ENCODE measurements at regions of chr17 and their contacts with region 1.

Region 1: DNA sequence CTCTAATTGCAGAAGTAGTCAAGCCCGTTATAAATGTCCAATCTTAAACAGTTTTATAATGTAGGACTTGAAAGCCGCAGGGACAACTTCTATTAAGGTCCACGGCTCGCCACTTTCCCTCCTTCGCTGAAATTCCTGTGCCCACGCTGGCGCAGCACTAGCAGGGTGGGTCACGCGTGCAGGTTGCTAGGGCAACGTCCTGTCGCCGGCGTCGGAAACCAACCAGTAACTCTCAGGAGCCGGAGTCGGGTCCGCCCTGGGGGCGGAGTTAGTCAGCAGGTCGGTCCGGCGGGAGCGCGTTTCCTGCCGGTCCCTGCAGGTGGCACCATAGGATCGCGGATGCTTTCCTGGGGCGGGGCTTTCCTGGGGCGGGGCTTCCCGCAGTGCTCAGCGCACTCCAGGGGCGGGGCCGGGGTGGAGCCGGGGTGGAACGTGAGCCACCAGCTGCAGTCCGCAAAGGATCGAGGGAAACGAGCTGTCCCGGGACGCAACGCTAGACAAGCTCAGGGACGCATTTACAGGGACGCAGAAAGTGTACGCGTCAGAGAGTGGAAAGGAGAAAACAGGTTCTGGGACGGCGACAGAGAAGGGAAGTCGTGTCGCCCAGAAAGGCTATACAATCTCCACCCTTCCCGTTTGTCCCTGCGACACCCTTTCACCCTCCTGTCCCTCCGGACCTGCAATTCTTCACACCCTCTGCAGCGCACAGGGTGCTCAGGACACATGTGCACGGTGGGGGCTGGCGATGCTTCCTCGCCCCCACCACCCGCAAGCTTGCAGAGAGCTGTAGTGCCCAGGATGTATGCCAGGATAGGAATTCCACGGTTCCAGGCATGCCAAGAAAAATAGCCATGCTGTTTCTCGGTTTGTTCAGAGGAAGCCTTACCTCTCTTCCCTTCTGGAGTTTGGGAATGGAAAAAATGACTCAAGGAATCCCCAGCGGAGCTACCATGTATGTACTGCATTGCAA is 12.4 kb downstream of the COPZ2 start:
- DNase-seq: peak; percentile 91 to 97 (median 95)
- ATAC-seq: peak; percentile 98
- H3K4me3 ChIP-seq: peak overlapping the region; percentile 43
- H3K4me3 Mint-ChIP-seq: peak overlapping the region; percentile 83 to 92 (median 88)
- H3K27ac ChIP-seq: no peak overlapping the region
- H3K27ac Mint-ChIP-seq: peak overlapping the region in 8 of 9 donors; percentile 13 to 91 (median 73)
- H3K4me1 ChIP-seq: peaks cover 9 to 26% of the 10 kb centered on the region in 2 donors
- H3K4me1 Mint-ChIP-seq: peaks cover 23 to 46% (median 34%) of the 10 kb centered on the region in 7 donors
- H3K27me3 ChIP-seq: peaks cover 0 to 11% of the 10 kb centered on the region in 2 donors
- H3K27me3 Mint-ChIP-seq: peaks cover 28 to 50% (median 40%) of the 10 kb centered on the region in 5 donors

Region 2: GRCh38 chr17:47840740-47841603 is 184.2 kb before region 1 on chr17 and contains the start of gene SCRN2:
- CTCF ChIA-PET with region 1: no interaction called
- POLR2A ChIA-PET with region 1: no interaction called
- intact Hi-C with region 1: loop called in 1 of 2 experiments (anchors 5 kb)
- DNase-seq: peak; percentile 71 to 94 (median 81)
- ATAC-seq: peak; percentile 94
- H3K4me3 ChIP-seq: peak within 1 kb of the TSS; percentile 95
- H3K4me3 Mint-ChIP-seq: peak within 1 kb of the TSS; percentile 84 to 99 (median 94)
- H3K27ac ChIP-seq: peak within 1 kb of the TSS; percentile 75
- H3K27ac Mint-ChIP-seq: peak within 1 kb of the TSS; percentile 55 to 93 (median 86)
- H3K4me1 ChIP-seq: peaks cover 19 to 21% of the 10 kb centered on the region in 2 donors
- H3K4me1 Mint-ChIP-seq: peaks cover 9 to 49% (median 38%) of the 10 kb centered on the region in 7 donors
- H3K27me3 ChIP-seq: peaks cover 0 to 7% of the 10 kb centered on the region in 2 donors
- H3K27me3 Mint-ChIP-seq: peaks cover 6 to 23% (median 18%) of the 10 kb centered on the region in 5 donors
- total RNA-seq, gene SCRN2: 33.4 to 55.9 (median 41.4) TPM

Region 3: GRCh38 chr17:47895856-47896671 is 129.2 kb before region 1 on chr17 and contains the start of gene SP2:
- CTCF ChIA-PET with region 1: no interaction called
- POLR2A ChIA-PET with region 1: no interaction called
- intact Hi-C with region 1: no loop called
- DNase-seq: peak; percentile 96 to 100 (median 100)
- ATAC-seq: peak; percentile 92
- H3K4me3 ChIP-seq: peak within 1 kb of the TSS; percentile 80
- H3K4me3 Mint-ChIP-seq: peak within 1 kb of the TSS; percentile 88 to 100 (median 97)
- H3K27ac ChIP-seq: peak within 1 kb of the TSS; percentile 98
- H3K27ac Mint-ChIP-seq: peak within 1 kb of the TSS; percentile 98 to 100 (median 99)
- H3K4me1 ChIP-seq: peaks cover 20 to 23% of the 10 kb centered on the region in 2 donors
- H3K4me1 Mint-ChIP-seq: peaks cover 31 to 66% (median 57%) of the 10 kb centered on the region in 7 donors
- H3K27me3 ChIP-seq: no peaks in the 10 kb centered on the region
- H3K27me3 Mint-ChIP-seq: peaks cover 0 to 4% (median 0%) of the 10 kb centered on the region in 5 donors
- total RNA-seq, gene SP2: 25.2 to 36.5 (median 30.8) TPM

Region 4: DNA sequence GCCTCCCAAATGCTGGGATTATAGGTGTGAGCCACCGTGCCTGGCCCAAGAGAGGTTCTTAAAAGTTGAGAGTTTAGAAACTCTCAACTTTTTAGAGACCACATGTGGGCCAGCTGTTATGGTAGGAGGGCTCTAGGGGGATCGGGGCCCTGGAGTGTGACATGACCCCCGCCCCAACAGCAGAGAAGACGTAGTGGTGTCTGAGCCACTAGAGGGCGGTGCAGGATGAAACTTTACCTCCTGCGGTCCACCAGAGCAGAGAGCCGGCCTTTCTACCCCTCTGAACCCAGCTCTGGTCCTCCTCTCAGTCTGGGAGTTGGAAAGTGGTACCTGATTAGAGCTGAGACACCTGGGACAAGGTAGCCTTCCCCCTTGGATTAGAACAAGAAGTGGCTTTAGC is 46.9 kb before region 1 on chr17:
- CTCF ChIA-PET with region 1: no interaction called
- POLR2A ChIA-PET with region 1: no interaction called
- intact Hi-C with region 1: loop called in 1 of 2 experiments (anchors 1 kb)
- DNase-seq: peak in 7 of 9 donors; percentile 18 to 52 (median 35)
- ATAC-seq: peak; percentile 78
- H3K4me3 ChIP-seq: no peak overlapping the region
- H3K4me3 Mint-ChIP-seq: no peak overlapping the region
- H3K27ac ChIP-seq: no peak overlapping the region
- H3K27ac Mint-ChIP-seq: no peak overlapping the region
- H3K4me1 ChIP-seq: peaks cover 0 to 5% of the 10 kb centered on the region in 2 donors
- H3K4me1 Mint-ChIP-seq: peaks cover 0 to 12% (median 4%) of the 10 kb centered on the region in 7 donors
- H3K27me3 ChIP-seq: no peaks in the 10 kb centered on the region
- H3K27me3 Mint-ChIP-seq: no peaks in the 10 kb centered on the region

Region 5: GRCh38 chr17:48074315-48075081 is 49.3 kb after region 1 on chr17:
- CTCF ChIA-PET with region 1: interaction called, 66 read pairs
- POLR2A ChIA-PET with region 1: interaction called, 14 read pairs
- intact Hi-C with region 1: loop called (anchors 1 kb)
- DNase-seq: peak; percentile 21 to 74 (median 65)
- ATAC-seq: peak; percentile 85
- H3K4me3 ChIP-seq: no peak overlapping the region
- H3K4me3 Mint-ChIP-seq: no peak overlapping the region
- H3K27ac ChIP-seq: no peak overlapping the region
- H3K27ac Mint-ChIP-seq: peak overlapping the region in 2 of 9 donors; percentile 9 to 25
- H3K4me1 ChIP-seq: no peaks in the 10 kb centered on the region
- H3K4me1 Mint-ChIP-seq: peaks cover 0 to 8% (median 0%) of the 10 kb centered on the region in 7 donors
- H3K27me3 ChIP-seq: no peaks in the 10 kb centered on the region
- H3K27me3 Mint-ChIP-seq: no peaks in the 10 kb centered on the region

Region 6: DNA sequence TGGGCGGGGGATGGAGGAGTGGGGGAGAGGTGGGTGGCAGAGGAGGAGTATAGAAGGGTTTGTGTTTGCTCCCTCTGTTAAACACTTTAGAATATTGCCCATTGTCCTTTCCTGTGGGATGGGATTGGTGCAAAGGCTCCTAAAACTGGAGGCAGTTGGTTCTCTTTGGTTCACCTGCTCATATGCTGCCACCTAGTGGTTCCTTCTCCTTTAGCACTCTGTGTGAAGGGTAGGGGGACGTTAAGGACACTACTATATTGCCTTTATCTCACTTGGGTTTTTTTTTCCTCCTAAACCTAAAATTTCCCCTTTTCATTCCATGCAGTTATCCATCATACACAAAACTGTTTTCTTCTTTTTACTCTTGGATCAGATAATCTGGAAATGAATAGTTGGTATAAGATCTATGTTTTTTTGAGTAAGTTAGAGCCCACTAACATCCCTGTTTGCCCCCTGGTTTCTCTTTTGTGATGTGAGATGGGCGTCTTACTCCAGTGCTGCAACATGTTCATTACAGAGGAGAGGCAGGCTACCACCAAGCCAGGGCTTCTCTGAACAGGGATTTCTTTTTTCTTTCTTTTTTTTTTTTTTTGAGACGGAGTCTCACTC is 106.1 kb after region 1 on chr17:
- CTCF ChIA-PET with region 1: interaction called, 5 read pairs
- POLR2A ChIA-PET with region 1: no interaction called
- intact Hi-C with region 1: loop called (anchors 1 kb)
- DNase-seq: peak in 8 of 9 donors; percentile 21 to 64 (median 56)
- ATAC-seq: peak; percentile 91
- H3K4me3 ChIP-seq: no peak overlapping the region
- H3K4me3 Mint-ChIP-seq: no peak overlapping the region
- H3K27ac ChIP-seq: no peak overlapping the region
- H3K27ac Mint-ChIP-seq: peak overlapping the region in 5 of 9 donors; percentile 75 to 79 (median 78)
- H3K4me1 ChIP-seq: no peaks in the 10 kb centered on the region
- H3K4me1 Mint-ChIP-seq: peaks cover 0 to 4% (median 0%) of the 10 kb centered on the region in 7 donors
- H3K27me3 ChIP-seq: no peaks in the 10 kb centered on the region
- H3K27me3 Mint-ChIP-seq: no peaks in the 10 kb centered on the region

Region 7: GRCh38 chr17:48610282-48611211 is 585.3 kb after region 1 on chr17 and contains the start of gene HOXB7:
- CTCF ChIA-PET with region 1: interaction called, 5 read pairs
- POLR2A ChIA-PET with region 1: no interaction called
- intact Hi-C with region 1: loop called in 1 of 2 experiments (anchors 2 kb)
- DNase-seq: peak in 3 of 9 donors; percentile 21 to 73 (median 32)
- ATAC-seq: peak; percentile 36
- H3K4me3 ChIP-seq: peak within 1 kb of the TSS; percentile 81
- H3K4me3 Mint-ChIP-seq: peak within 1 kb of the TSS; percentile 74 to 97 (median 90)
- H3K27ac ChIP-seq: no peak within 1 kb of the TSS
- H3K27ac Mint-ChIP-seq: peak within 1 kb of the TSS in 6 of 9 donors; percentile 26 to 77 (median 70)
- H3K4me1 ChIP-seq: peaks cover 28 to 42% of the 10 kb centered on the region in 2 donors
- H3K4me1 Mint-ChIP-seq: peaks cover 30 to 49% (median 44%) of the 10 kb centered on the region in 7 donors
- H3K27me3 ChIP-seq: peaks cover 11 to 46% of the 10 kb centered on the region in 2 donors
- H3K27me3 Mint-ChIP-seq: peaks cover 73 to 83% (median 77%) of the 10 kb centered on the region in 5 donors
- total RNA-seq, gene HOXB7: 0.31 TPM in 1 of 5 experiments, not detected in the others

Region 8: DNA sequence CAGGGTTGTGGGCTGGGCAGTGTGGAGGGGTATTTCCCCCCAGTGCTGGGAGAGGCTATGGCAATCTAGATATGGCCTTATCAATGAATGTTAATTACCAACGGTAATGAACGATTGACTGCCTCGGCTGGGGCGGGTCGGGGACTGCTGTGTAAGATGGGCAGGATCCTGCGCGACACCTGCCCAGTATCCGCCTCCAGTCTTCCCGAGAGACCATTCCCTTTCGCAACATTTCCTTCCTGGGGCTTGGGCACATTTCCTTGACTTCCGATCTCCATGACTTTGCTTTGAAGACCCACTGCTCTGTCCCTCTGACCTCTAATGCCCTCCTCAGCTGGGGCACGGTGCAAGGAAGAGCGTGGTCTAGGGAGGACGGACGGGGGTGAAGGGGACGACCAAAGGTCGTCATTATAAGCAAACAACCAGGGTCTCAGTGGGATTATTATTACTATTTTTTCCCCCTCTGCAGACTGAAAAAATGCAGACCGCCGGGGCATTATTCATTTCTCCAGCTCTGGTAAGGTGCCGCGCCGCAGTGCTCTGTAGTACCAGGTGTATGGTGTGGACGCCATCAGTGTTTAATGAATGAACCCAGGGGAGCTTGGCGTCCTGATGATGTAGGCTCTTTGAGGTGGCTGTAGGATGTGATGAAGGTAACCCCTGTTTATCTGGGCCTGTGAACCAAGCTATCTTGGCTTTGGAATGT is 867.9 kb after region 1 on chr17:
- CTCF ChIA-PET with region 1: no interaction called
- POLR2A ChIA-PET with region 1: no interaction called
- intact Hi-C with region 1: loop called in 1 of 2 experiments (anchors 1 kb)
- DNase-seq: peak in 2 of 9 donors; percentile 11 to 14
- ATAC-seq: no peak
- H3K4me3 ChIP-seq: peak overlapping the region; percentile 60
- H3K4me3 Mint-ChIP-seq: peak overlapping the region; percentile 87 to 98 (median 94)
- H3K27ac ChIP-seq: peak overlapping the region; percentile 82
- H3K27ac Mint-ChIP-seq: peak overlapping the region; percentile 91 to 100 (median 93)
- H3K4me1 ChIP-seq: peaks cover 5 to 16% of the 10 kb centered on the region in 2 donors
- H3K4me1 Mint-ChIP-seq: peaks cover 17 to 42% (median 29%) of the 10 kb centered on the region in 7 donors
- H3K27me3 ChIP-seq: no peaks in the 10 kb centered on the region
- H3K27me3 Mint-ChIP-seq: peaks cover 0 to 3% (median 0%) of the 10 kb centered on the region in 5 donors